Caco-2 (cell line): ENCODE measurements at regions of chr2 and their contacts with region 1.

Region 1: GRCh38 chr2:118882709-118883210 is 35.3 kb upstream of the EN1 start:
- DNase-seq: peak; percentile 76 to 80
- H3K4me3 ChIP-seq: 0 out of 2 replicates have a peak overlapping the region, but pooled peaks have one; percentile 14
- H3K4me3 Mint-ChIP-seq: peak overlapping the region; percentile 70
- H3K27ac Mint-ChIP-seq: no peak overlapping the region
- H3K4me1 ChIP-seq: no peaks in the 10 kb centered on the region
- H3K4me1 Mint-ChIP-seq: no peaks in the 10 kb centered on the region
- H3K27me3 ChIP-seq: no peaks in the 10 kb centered on the region
- H3K27me3 Mint-ChIP-seq: peaks cover 2% of the 10 kb centered on the region
- CTCF ChIP-seq: peak; percentile 90 to 97

Region 2: DNA sequence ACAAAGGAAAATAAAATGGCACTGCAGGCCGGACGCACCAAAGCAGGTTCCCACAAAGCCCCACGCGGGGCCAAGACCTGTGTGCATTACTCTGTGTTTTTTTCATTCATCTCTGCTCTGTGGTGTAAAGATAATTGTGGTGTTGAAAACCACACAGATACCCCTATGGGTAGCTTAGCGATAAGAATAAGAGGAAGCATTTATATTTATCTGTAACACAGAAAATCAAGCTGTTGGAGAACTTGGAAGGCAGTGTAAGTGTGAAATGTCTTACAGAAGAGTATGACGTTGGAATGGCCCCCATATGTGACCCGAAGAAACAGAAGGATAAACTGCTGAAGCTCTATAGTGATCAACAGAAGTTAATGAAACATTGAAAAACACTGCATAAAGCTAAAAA is 38.9 kb after region 1 on chr2:
- CTCF ChIA-PET with region 1: no interaction called
- POLR2A ChIA-PET with region 1: no interaction called
- intact Hi-C with region 1: no loop called
- DNase-seq: no peak
- H3K4me3 ChIP-seq: no peak overlapping the region
- H3K4me3 Mint-ChIP-seq: no peak overlapping the region
- H3K27ac Mint-ChIP-seq: no peak overlapping the region
- H3K4me1 ChIP-seq: peaks cover 23% of the 10 kb centered on the region
- H3K4me1 Mint-ChIP-seq: peaks cover 19% of the 10 kb centered on the region
- H3K27me3 ChIP-seq: no peaks in the 10 kb centered on the region
- H3K27me3 Mint-ChIP-seq: no peaks in the 10 kb centered on the region
- CTCF ChIP-seq: no peak

Region 3: GRCh38 chr2:118940486-118941205 is 57.9 kb after region 1 on chr2:
- CTCF ChIA-PET with region 1: interaction called, 3 read pairs
- POLR2A ChIA-PET with region 1: no interaction called
- intact Hi-C with region 1: loop called (anchors 2 kb)
- DNase-seq: no peak
- H3K4me3 ChIP-seq: no peak overlapping the region
- H3K4me3 Mint-ChIP-seq: no peak overlapping the region
- H3K27ac Mint-ChIP-seq: no peak overlapping the region
- H3K4me1 ChIP-seq: no peaks in the 10 kb centered on the region; the same call in 1 of the 2 replicates
- H3K4me1 Mint-ChIP-seq: no peaks in the 10 kb centered on the region
- H3K27me3 ChIP-seq: no peaks in the 10 kb centered on the region
- H3K27me3 Mint-ChIP-seq: no peaks in the 10 kb centered on the region
- CTCF ChIP-seq: no peak

Region 4: GRCh38 chr2:119028327-119029174 is 145.8 kb after region 1 on chr2:
- CTCF ChIA-PET with region 1: interaction called, 5 read pairs
- POLR2A ChIA-PET with region 1: no interaction called
- intact Hi-C with region 1: loop called (anchors 1 kb)
- DNase-seq: peak; percentile 63 to 65
- H3K4me3 ChIP-seq: no peak overlapping the region
- H3K4me3 Mint-ChIP-seq: no peak overlapping the region
- H3K27ac Mint-ChIP-seq: no peak overlapping the region
- H3K4me1 ChIP-seq: no peaks in the 10 kb centered on the region
- H3K4me1 Mint-ChIP-seq: no peaks in the 10 kb centered on the region
- H3K27me3 ChIP-seq: no peaks in the 10 kb centered on the region; the same call in 1 of the 2 replicates
- H3K27me3 Mint-ChIP-seq: peaks cover 17% of the 10 kb centered on the region
- CTCF ChIP-seq: peak; percentile 71 to 78

Region 5: GRCh38 chr2:119174216-119175037 is 291.7 kb after region 1 on chr2:
- CTCF ChIA-PET with region 1: interaction called, 3 read pairs
- POLR2A ChIA-PET with region 1: no interaction called
- intact Hi-C with region 1: loop called (anchors 1 kb)
- DNase-seq: peak; percentile 70 to 75
- H3K4me3 ChIP-seq: no peak overlapping the region
- H3K4me3 Mint-ChIP-seq: no peak overlapping the region
- H3K27ac Mint-ChIP-seq: no peak overlapping the region
- H3K4me1 ChIP-seq: no peaks in the 10 kb centered on the region
- H3K4me1 Mint-ChIP-seq: no peaks in the 10 kb centered on the region
- H3K27me3 ChIP-seq: no peaks in the 10 kb centered on the region
- H3K27me3 Mint-ChIP-seq: peaks cover 3% of the 10 kb centered on the region
- CTCF ChIP-seq: peak; percentile 83 to 92

Region 6: GRCh38 chr2:119290859-119291587 is 408.3 kb after region 1 on chr2:
- CTCF ChIA-PET with region 1: interaction called, 6 read pairs
- POLR2A ChIA-PET with region 1: no interaction called
- intact Hi-C with region 1: loop called (anchors 1 kb)
- DNase-seq: peak; percentile 90 to 92
- H3K4me3 ChIP-seq: no peak overlapping the region
- H3K4me3 Mint-ChIP-seq: no peak overlapping the region
- H3K27ac Mint-ChIP-seq: no peak overlapping the region
- H3K4me1 ChIP-seq: no peaks in the 10 kb centered on the region
- H3K4me1 Mint-ChIP-seq: no peaks in the 10 kb centered on the region
- H3K27me3 ChIP-seq: no peaks in the 10 kb centered on the region
- H3K27me3 Mint-ChIP-seq: no peaks in the 10 kb centered on the region
- CTCF ChIP-seq: peak; percentile 95 to 98